Mammary epithelial cell (primary cell): ENCODE measurements at regions of chr13 and their contacts with region 1.

Region 1: GRCh38 chr13:30114571-30115256 is 192.6 kb downstream of the KATNAL1 start:
- DNase-seq: peak; percentile 82
- H3K4me3 ChIP-seq: peak overlapping the region; percentile 23 to 66 (median 49)
- H3K27ac ChIP-seq: peak overlapping the region; percentile 49
- H3K4me1 ChIP-seq: peaks cover 19% of the 10 kb centered on the region
- H3K27me3 ChIP-seq: no peaks in the 10 kb centered on the region
- CTCF ChIP-seq: peak; percentile 79 to 93

Region 2: GRCh38 chr13:29508130-29508875 is 606.4 kb before region 1 on chr13:
- CTCF ChIA-PET with region 1: no interaction called
- dilution Hi-C with region 1: no loop called
- in situ Hi-C with region 1: no loop called
- intact Hi-C with region 1: loop called (anchors 2 kb)
- DNase-seq: peak; percentile 42
- H3K4me3 ChIP-seq: no peak overlapping the region
- H3K27ac ChIP-seq: no peak overlapping the region
- H3K4me1 ChIP-seq: no peaks in the 10 kb centered on the region
- H3K27me3 ChIP-seq: no peaks in the 10 kb centered on the region
- CTCF ChIP-seq: peak; percentile 97 to 98

Region 3: GRCh38 chr13:29713839-29714238 is 400.9 kb before region 1 on chr13:
- CTCF ChIA-PET with region 1: no interaction called
- dilution Hi-C with region 1: no loop called
- in situ Hi-C with region 1: loop called in 1 of 2 experiments (anchors 10 kb)
- intact Hi-C with region 1: loop called (anchors 5 kb)
- DNase-seq: peak; percentile 12
- H3K4me3 ChIP-seq: no peak overlapping the region
- H3K27ac ChIP-seq: no peak overlapping the region
- H3K4me1 ChIP-seq: no peaks in the 10 kb centered on the region
- H3K27me3 ChIP-seq: peaks cover 2% of the 10 kb centered on the region
- CTCF ChIP-seq: peak; percentile 59 to 84

Region 4: DNA sequence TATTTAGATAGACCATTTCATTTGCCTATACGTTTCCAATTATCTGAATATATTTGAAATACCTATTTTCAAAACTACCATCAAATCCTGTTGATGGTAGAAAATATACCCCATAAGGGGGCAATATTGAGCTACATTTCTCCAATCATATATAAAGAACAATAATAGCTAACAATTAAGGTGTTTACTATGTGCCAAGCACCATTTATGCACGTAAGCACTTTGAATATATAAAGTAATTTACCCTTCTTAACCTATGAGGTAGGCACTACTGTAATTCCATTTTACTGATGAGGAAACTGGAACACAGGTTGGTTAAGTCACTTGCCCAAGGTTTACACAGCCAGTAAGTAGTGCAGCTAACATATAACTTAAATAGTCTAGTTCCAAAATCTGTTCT is 343.5 kb before region 1 on chr13:
- CTCF ChIA-PET with region 1: interaction called, 11 read pairs
- dilution Hi-C with region 1: no loop called
- in situ Hi-C with region 1: loop called in 1 of 2 experiments (anchors 5 kb)
- intact Hi-C with region 1: loop called (anchors 1 kb)
- DNase-seq: peak; percentile 10
- H3K4me3 ChIP-seq: no peak overlapping the region
- H3K27ac ChIP-seq: no peak overlapping the region
- H3K4me1 ChIP-seq: no peaks in the 10 kb centered on the region
- H3K27me3 ChIP-seq: no peaks in the 10 kb centered on the region
- CTCF ChIP-seq: peak; percentile 26 to 41